GM23248 (cell line): ENCODE measurements at regions of chr20 and their contacts with region 1.

Region 1: DNA sequence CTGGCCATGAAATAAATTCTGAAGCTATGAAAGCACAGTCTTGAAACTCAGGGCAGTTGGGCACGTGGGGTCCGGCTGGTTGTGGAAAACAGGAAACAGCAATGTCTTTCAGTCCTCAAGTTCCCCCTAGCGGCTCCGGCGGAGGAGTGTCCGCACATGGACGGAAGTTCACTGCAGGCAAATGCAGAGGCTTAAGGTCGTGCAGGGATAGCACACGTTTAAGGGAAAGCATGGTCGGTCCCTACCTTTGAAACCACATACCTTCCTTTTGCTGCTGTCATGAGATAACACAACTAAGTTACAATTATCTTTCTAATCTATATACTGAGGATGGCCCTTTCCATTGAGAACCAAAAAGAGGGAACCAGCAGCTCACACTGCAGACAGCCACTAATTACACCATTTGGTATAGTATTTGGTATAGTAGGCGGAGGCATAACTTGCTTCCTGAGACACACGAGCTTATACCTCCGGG is 52.6 kb upstream of the NFATC2 start:
- DNase-seq: peak; percentile 94
- H3K4me3 ChIP-seq: 0 out of 2 replicates have a peak overlapping the region, but pooled peaks have one; percentile 14
- H3K27ac ChIP-seq: no peak overlapping the region
- H3K4me1 ChIP-seq: 0 out of 2 replicates have a peak, but pooled peaks cover 5% of the 10 kb centered on the region
- H3K27me3 ChIP-seq: no peaks in the 10 kb centered on the region

Region 2: GRCh38 chr20:51378171-51378929 is 216.7 kb before region 1 on chr20:
- in situ Hi-C with region 1: loop called (anchors 5 kb)
- DNase-seq: no peak
- H3K4me3 ChIP-seq: no peak overlapping the region
- H3K27ac ChIP-seq: no peak overlapping the region
- H3K4me1 ChIP-seq: peaks cover 7% of the 10 kb centered on the region
- H3K27me3 ChIP-seq: no peaks in the 10 kb centered on the region